ENCODE measurements at regions of chr6 and their contacts with region 1.

Region 1: DNA sequence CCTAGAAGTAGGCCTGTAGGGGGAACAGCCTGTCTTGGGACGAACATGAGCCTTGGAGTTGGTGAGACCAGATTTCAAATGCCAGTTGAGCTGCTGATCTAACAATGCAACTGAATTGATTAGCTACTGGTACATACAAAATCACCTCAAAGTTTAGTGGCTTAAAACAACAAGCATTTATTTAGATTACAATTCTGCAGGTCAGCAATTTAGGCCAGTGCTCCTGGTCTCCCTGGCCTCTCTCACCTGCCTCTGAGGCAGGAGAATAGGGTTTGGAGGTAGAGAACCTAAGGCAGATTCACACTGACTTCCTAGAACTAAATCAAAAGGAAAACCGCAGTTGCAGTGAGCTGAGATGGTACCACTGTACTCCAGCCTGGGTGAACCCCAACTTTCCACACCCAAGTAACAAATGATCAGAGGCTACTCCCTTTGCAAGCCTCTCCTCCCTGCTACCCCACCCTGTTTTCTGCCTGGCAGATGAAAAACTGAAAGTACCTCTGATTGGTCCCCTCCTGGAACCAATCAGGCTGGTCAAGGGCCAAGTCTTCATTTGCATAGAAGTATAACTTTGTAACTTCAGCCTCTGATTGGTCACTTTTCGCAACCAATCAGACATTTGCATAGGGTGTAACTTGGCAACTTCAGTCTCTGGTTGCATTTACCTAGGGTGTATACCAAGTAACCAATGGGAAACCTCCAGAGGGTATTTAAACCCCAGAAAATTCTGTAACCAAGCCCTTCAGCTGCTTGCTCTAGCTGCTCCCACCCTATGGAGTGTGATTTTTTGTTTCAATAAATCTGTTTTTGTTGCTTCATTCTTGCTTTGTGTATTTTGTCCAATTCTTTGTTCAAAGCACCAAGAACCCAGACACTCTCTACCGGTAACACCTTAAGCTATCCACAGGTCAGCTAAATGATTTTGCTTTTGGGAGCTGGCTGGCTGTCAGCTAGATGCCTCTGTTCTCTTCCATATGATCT is 8.1 kb upstream of the UBR2 start:
- DNase-seq: no peak
- ATAC-seq: no peak
- H3K4me3 ChIP-seq: no peak overlapping the region
- H3K4me3 Mint-ChIP-seq: no peak overlapping the region
- H3K27ac ChIP-seq: no peak overlapping the region
- H3K27ac Mint-ChIP-seq: no peak overlapping the region
- H3K4me1 ChIP-seq: peaks cover 0 to 5% of the 10 kb centered on the region in 2 donors
- H3K4me1 Mint-ChIP-seq: peaks cover 4% of the 10 kb centered on the region
- H3K27me3 ChIP-seq: peaks cover 0 to 7% (median 0%) of the 10 kb centered on the region in 4 experiments
- H3K27me3 Mint-ChIP-seq: peaks cover 7% of the 10 kb centered on the region
- CTCF ChIP-seq: no peak

Region 2: DNA sequence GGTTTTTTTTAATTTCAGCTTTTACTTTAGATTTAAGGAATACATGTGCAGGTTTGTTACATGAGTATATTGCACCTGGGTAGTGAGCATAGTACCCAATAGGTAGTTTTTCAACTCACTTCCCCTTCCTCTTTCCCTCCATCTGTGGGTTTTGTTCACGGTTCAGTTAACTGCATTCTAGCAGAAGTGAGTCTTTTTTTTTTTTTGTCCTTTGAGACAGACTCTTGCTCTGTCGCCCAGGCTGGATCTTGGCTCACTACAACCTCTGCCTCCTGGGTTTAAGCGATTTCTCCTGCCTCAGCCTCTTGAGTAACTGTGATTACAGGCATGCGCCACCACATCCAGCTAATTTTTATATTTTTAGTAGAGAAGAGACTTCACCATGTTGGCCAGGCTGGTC is 16.8 kb after region 1 on chr6:
- CTCF ChIA-PET with region 1: interaction called, 5 read pairs
- POLR2A ChIA-PET with region 1: interaction called, 12 read pairs
- intact Hi-C with region 1: no loop called
- DNase-seq: peak; percentile 88
- ATAC-seq: peak; percentile 98
- H3K4me3 ChIP-seq: peak overlapping the region in 1 of 5 experiments; percentile 11
- H3K4me3 Mint-ChIP-seq: peak overlapping the region; percentile 3
- H3K27ac ChIP-seq: peak overlapping the region; percentile 51 to 68
- H3K27ac Mint-ChIP-seq: peak overlapping the region; percentile 75
- H3K4me1 ChIP-seq: peaks cover 28 to 31% of the 10 kb centered on the region in 2 donors
- H3K4me1 Mint-ChIP-seq: peaks cover 36% of the 10 kb centered on the region
- H3K27me3 ChIP-seq: no peaks in the 10 kb centered on the region
- H3K27me3 Mint-ChIP-seq: no peaks in the 10 kb centered on the region
- CTCF ChIP-seq: no peak

Region 3: DNA sequence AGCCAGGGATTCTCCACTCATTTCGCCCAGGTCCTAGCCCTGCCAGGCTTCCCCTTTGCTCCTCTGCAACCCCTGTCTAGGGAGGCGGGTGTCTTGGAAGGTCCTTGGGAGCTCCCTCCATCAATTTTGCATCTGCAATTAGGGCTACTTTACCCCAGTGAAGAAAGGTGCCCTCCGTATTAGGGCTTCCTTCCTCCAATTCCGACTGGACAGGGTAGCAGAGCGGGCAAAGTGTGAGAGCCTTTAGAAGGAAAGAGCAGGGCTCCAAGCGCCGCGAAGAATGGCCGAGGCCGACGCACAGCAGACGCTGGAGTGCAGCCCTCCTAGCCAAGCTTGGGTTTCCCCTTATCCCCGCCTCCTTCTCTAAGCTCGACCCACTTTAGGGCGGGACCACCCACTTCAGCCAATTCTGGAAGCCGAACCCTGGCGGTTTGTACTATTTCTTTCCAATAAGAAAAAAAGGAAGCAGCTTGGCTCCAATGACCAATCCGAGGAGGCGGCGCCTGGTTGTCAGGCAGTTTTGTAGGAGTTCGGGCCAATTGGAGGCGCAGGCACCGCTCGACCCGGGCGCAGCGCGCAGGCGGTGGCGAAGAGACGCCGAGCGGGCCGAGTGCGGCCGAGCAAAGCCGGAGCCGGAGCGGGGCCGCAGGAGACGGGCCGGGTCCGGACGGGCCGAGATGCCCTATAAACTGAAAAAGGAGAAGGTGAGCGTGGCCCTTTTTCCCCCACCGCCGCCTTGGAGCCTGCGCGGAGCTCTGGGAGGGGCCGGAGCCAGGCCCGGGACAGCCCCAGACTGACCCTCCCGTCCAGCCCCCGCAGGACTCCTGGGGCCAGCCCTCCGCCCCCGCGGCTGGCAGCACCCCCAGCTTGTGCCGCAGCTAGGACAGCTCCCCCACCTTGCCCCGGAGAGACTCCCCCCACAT is 428.5 kb after region 1 on chr6 and contains the start of gene PPP2R5D:
- CTCF ChIA-PET with region 1: no interaction called
- POLR2A ChIA-PET with region 1: no interaction called
- intact Hi-C with region 1: no loop called
- DNase-seq: peak; percentile 98
- ATAC-seq: peak; percentile 95
- H3K4me3 ChIP-seq: peak within 1 kb of the TSS; percentile 54 to 96 (median 91)
- H3K4me3 Mint-ChIP-seq: peak within 1 kb of the TSS; percentile 89
- H3K27ac ChIP-seq: peak within 1 kb of the TSS; percentile 74 to 86
- H3K27ac Mint-ChIP-seq: peak within 1 kb of the TSS; percentile 95
- H3K4me1 ChIP-seq: peaks cover 18 to 30% of the 10 kb centered on the region in 2 donors
- H3K4me1 Mint-ChIP-seq: peaks cover 49% of the 10 kb centered on the region
- H3K27me3 ChIP-seq: no peaks in the 10 kb centered on the region
- H3K27me3 Mint-ChIP-seq: no peaks in the 10 kb centered on the region
- CTCF ChIP-seq: no peak
- total RNA-seq, gene PPP2R5D: 23.6 and 26.3 TPM in 2 replicates

Region 4: GRCh38 chr6:43013843-43014433 is 458.2 kb after region 1 on chr6 and contains the starts of genes KLHDC3 and MEA1:
- CTCF ChIA-PET with region 1: no interaction called
- POLR2A ChIA-PET with region 1: no interaction called
- intact Hi-C with region 1: no loop called
- DNase-seq: peak; percentile 99
- ATAC-seq: peak; percentile 97
- H3K4me3 ChIP-seq: peak within 1 kb of the TSS; percentile 61 to 79 (median 70)
- H3K4me3 Mint-ChIP-seq: peak within 1 kb of the TSS; percentile 91
- H3K27ac ChIP-seq: peak within 1 kb of the TSS; percentile 35 to 69
- H3K27ac Mint-ChIP-seq: peak within 1 kb of the TSS; percentile 96
- H3K4me1 ChIP-seq: peaks cover 20 to 23% of the 10 kb centered on the region in 2 donors
- H3K4me1 Mint-ChIP-seq: peaks cover 50% of the 10 kb centered on the region
- H3K27me3 ChIP-seq: no peaks in the 10 kb centered on the region
- H3K27me3 Mint-ChIP-seq: no peaks in the 10 kb centered on the region
- CTCF ChIP-seq: no peak
- total RNA-seq, gene KLHDC3: 50.7 and 52.2 TPM in 2 replicates
- total RNA-seq, gene MEA1: 32.5 and 35.7 TPM in 2 replicates

Measured in B cell (primary cell).